ENCODE measurements at regions of chr17 and their contacts with region 1.

Region 1: GRCh38 chr17:4054446-4054845 is 88.4 kb downstream of the ZZEF1 start:
- DNase-seq: no peak
- H3K4me3 ChIP-seq: no peak overlapping the region
- H3K27ac ChIP-seq: no peak overlapping the region
- H3K4me1 ChIP-seq: no peaks in the 10 kb centered on the region
- H3K27me3 ChIP-seq: no peaks in the 10 kb centered on the region
- CTCF ChIP-seq: no peak

Region 2: GRCh38 chr17:3959295-3959925 is 95.0 kb before region 1 on chr17:
- CTCF ChIA-PET with region 1: no interaction called
- dilution Hi-C with region 1: loop called (anchors 5 kb)
- in situ Hi-C with region 1: no loop called
- intact Hi-C with region 1: no loop called
- DNase-seq: no peak
- H3K4me3 ChIP-seq: no peak overlapping the region
- H3K27ac ChIP-seq: no peak overlapping the region
- H3K4me1 ChIP-seq: no peaks in the 10 kb centered on the region
- H3K27me3 ChIP-seq: peaks cover 12% of the 10 kb centered on the region
- CTCF ChIP-seq: no peak

Region 3: DNA sequence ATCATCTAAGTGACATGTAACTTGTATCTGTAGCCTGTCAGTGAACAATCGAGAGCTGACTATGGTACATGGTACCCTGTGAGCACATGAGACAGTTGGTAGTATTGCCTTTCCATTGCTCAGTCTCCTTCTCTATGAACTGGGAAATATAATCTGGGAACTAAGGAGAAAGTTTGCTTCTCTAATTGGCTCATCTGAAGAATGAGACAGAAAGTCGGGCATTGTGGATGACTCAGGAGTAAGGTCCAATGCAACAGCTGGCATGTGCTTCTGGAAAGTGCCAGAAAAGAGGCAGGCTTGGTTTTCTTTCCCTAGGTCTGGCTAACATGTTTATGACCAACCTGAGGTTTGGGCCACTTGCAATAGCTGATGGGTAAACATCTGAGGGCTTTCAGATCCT is 36.5 kb after region 1 on chr17:
- CTCF ChIA-PET with region 1: no interaction called
- dilution Hi-C with region 1: loop called (anchors 5 kb)
- in situ Hi-C with region 1: no loop called
- intact Hi-C with region 1: no loop called
- DNase-seq: no peak
- H3K4me3 ChIP-seq: no peak overlapping the region
- H3K27ac ChIP-seq: no peak overlapping the region
- H3K4me1 ChIP-seq: no peaks in the 10 kb centered on the region
- H3K27me3 ChIP-seq: no peaks in the 10 kb centered on the region
- CTCF ChIP-seq: no peak

Region 4: DNA sequence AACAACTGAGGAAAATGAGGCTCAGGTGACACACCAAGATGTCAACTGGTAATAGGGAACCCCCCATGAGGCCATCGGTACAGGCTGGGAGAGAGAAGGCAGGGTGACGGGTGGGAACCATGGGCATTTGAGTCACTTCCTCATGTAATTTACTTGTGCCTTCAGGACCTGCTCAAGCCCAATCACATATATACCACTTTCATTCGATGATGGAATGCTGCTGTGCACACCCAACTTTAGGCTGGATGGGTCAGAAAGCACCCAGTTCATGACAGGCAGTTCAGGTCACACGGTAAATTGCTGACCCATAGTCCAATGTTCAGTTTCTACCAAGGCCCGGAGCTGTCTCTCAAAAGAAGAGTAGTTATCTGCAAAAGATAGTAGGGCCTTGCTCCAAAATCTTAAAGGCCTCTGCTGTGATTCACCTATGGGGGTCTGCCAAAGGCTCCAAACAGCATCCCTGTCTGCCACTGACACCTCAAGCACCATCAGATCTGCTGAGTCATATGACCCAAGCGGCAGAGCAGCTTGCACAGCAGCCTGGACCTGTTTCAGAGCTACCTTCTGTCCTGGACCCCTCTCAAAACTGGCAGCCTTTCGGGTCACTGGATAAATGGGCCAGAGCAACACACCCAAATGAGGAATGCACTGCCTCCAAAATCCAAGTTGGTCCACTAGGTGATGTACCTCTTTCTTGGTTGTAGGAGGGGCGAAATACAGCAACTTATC is 63.7 kb after region 1 on chr17:
- CTCF ChIA-PET with region 1: no interaction called
- dilution Hi-C with region 1: loop called (anchors 5 kb)
- in situ Hi-C with region 1: no loop called
- intact Hi-C with region 1: no loop called
- DNase-seq: no peak
- H3K4me3 ChIP-seq: no peak overlapping the region
- H3K27ac ChIP-seq: no peak overlapping the region
- H3K4me1 ChIP-seq: no peaks in the 10 kb centered on the region
- H3K27me3 ChIP-seq: no peaks in the 10 kb centered on the region
- CTCF ChIP-seq: no peak

Measured in mammary epithelial cell (primary cell).